Activated CD4-positive, alpha-beta T cell treated with anti-CD3 and anti-CD28 coated beads, Interleukin-2, amount 10 ng/mL, durations not matched to agents 24 days and 14 days (primary cell): ENCODE measurements at regions of chrX and their contacts with region 1.

Region 1: DNA sequence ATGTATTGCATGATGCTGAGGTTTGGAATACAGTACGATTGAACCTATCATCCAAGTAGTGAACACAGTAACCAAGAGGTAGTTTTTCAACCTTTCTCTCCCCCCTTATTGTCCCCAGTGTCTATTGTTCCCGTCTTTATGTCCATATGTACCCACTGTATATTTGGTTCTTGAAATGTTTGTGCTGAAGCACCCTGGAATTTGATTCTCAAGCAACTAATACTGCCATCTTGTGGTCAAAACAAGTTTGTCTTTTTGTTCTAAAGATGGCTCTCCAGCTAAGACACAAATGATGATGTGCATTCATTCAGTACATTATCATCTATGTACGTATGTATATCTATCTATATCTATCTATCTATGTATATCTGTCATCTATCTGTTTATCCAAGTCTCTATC is 33.5 kb upstream of the DCX start:
- DNase-seq: peak; percentile 52
- H3K4me3 Mint-ChIP-seq: no peak overlapping the region
- H3K27ac Mint-ChIP-seq: no peak overlapping the region
- H3K4me1 Mint-ChIP-seq: no peaks in the 10 kb centered on the region
- H3K27me3 Mint-ChIP-seq: peaks cover 1% of the 10 kb centered on the region

Region 2: DNA sequence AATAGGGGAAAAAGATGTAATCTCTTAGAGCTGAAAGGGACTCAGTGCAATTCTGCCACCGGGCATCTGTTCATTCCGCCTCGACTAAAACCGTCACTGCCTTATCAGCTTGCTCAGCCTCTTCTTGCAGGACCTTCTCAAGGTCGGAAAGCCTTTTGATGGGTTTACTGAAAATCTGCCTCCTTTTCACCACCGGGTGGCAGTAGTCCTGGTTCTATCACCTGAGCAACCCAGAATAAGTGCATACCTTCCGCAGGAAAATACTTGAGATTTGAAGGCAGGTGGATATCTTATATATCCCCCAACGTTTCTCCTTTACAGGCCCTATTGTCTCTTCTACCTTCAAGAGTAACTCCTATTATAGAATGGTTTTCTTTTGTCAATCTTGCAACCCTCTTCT is 452.9 kb before region 1 on chrX:
- intact Hi-C with region 1: loop called (anchors 10 kb)
- DNase-seq: peak; percentile 58
- H3K4me3 Mint-ChIP-seq: no peak overlapping the region
- H3K27ac Mint-ChIP-seq: no peak overlapping the region
- H3K4me1 Mint-ChIP-seq: no peaks in the 10 kb centered on the region
- H3K27me3 Mint-ChIP-seq: peaks cover 6% of the 10 kb centered on the region

Region 3: GRCh38 chrX:111671668-111672067 is 226.2 kb after region 1 on chrX:
- intact Hi-C with region 1: no loop called
- DNase-seq: no peak
- H3K4me3 Mint-ChIP-seq: no peak overlapping the region
- H3K27ac Mint-ChIP-seq: no peak overlapping the region
- H3K4me1 Mint-ChIP-seq: no peaks in the 10 kb centered on the region
- H3K27me3 Mint-ChIP-seq: peaks cover 2% of the 10 kb centered on the region